ENCODE measurements at regions of chr2 and their contacts with region 1.

Region 1: DNA sequence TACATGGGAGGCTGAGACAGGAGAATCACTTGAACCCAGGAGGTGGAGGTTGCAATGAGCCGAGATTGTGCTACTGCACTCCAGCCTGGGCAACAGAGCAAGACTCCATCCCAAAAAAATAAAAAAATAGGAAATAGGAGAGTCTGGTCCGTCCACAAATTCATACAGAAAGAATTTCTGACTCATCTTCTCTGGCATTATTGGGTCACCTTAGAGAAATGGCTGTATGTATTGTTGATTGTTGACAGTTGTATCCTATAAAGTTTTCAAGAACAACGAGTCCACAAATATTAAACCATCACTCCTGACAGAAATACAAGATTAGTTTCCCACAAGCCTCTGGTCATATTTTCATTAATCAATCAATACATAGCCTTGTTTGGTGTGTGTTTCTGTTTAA is 20.4 kb downstream of the RBM43 start:
- DNase-seq: no peak
- ATAC-seq: no peak

Region 2: DNA sequence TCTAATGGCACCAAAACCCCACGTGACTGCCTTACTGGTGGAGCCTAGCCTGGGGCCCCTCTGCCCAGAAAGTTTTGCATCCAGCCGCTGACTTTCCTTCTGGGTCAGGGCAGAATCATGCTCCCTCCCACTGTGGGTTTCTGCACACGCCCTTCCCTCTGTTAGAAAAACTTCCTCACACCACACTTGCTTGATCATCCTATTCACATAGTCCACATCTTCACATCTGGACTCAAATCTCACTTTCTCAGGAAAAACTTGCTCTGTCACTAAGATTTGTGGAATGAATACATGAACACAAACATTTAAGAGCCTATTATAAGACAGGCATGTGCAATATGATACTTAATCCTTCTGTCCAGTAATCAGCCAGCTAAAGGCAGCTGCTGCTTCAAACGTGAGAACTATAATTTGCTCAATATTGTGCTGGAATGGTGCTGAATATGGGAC is 1028.5 kb before region 1 on chr2:
- intact Hi-C with region 1: no loop called
- DNase-seq: no peak
- ATAC-seq: peak; percentile 15

Region 3: GRCh38 chr2:153138619-153139375 is 1897.6 kb after region 1 on chr2:
- intact Hi-C with region 1: loop called (anchors 10 kb)
- DNase-seq: no peak
- ATAC-seq: no peak

Measured in sciatic nerve (tissue), 2 donors.